PC-9 (cell line): ENCODE measurements at regions of chr5 and their contacts with region 1.

Region 1: GRCh38 chr5:39074016-39074886 is at the start of gene RICTOR:
- DNase-seq: peak; percentile 67 to 99
- H3K4me3 ChIP-seq: peak within 1 kb of the TSS; percentile 93
- H3K27ac ChIP-seq: peak within 1 kb of the TSS; percentile 96
- H3K4me1 ChIP-seq: peaks cover 41% of the 10 kb centered on the region
- H3K27me3 ChIP-seq: no peaks in the 10 kb centered on the region
- CTCF ChIP-seq: no peak
- total RNA-seq, gene RICTOR: 103 and 121 TPM in 2 replicates

Region 2: GRCh38 chr5:38845526-38846378 is 228.5 kb before region 1 on chr5 and contains the start of gene OSMR:
- CTCF ChIA-PET with region 1: no interaction called
- POLR2A ChIA-PET with region 1: no interaction called
- intact Hi-C with region 1: loop called (anchors 5 kb)
- DNase-seq: peak; percentile 92 to 100
- H3K4me3 ChIP-seq: peak within 1 kb of the TSS; percentile 79
- H3K27ac ChIP-seq: peak within 1 kb of the TSS; percentile 95
- H3K4me1 ChIP-seq: peaks cover 48% of the 10 kb centered on the region
- H3K27me3 ChIP-seq: no peaks in the 10 kb centered on the region
- CTCF ChIP-seq: no peak
- total RNA-seq, gene OSMR: 45.3 and 65.4 TPM in 2 replicates

Region 3: DNA sequence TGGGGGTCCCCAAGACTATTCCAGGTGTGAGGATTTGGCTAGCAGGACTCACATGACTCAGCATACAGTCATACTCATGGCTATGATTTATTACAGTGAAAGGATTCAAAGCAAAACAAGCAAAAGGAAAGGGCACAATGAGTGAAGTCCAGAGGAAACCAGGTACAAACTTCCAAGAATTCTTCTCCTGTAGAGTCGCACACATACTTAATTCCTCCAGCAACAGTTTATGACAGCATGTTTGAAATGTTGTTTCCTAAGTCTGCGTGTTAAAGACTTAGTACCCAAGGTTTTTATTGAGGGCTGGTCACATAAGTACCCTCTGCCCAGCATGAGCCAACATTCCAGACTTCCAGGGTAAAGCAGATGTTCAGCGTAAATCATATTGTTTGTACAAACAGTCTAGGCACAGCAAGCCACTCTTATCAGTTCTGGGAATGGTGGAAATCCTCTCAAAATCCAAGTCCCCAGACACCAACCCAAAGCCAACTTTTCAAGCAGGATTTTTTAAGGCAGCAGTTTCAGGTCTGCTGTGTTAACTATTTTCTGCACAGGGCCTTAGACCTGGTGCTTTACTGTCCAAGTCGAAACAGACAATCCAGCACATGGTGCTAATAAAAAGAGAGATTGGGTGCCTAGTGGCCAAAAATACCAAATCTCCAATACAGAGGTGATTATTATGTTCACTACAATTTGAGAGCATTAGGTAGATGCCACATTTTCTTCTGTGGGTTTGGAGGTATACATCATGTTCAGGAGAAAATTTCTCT is 18.5 kb after region 1 on chr5:
- CTCF ChIA-PET with region 1: interaction called, 3 read pairs
- POLR2A ChIA-PET with region 1: interaction called, 3 read pairs
- intact Hi-C with region 1: loop called (anchors 2 kb)
- DNase-seq: peak in 1 of 2 experiments; percentile 71
- H3K4me3 ChIP-seq: no peak overlapping the region
- H3K27ac ChIP-seq: peak overlapping the region; percentile 75
- H3K4me1 ChIP-seq: peaks cover 18% of the 10 kb centered on the region
- H3K27me3 ChIP-seq: no peaks in the 10 kb centered on the region
- CTCF ChIP-seq: no peak

Region 4: DNA sequence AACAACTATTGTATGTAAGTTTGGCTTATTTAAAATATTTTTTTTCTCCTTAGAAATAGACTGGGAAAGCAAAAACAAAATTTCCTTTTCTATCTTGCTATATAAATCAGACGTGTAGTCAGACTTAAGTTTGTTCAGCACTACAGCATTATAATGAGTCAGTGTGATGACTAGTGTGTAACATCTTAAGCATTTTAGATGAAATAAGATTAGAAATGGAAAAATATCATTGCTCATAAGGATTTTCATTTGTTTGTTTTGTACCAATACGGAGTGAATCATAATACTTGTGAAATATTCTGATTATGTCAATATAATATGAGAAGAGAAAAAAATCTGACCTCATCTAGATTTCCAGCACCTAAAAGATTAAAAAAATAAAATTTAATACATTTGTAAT is 64.6 kb after region 1 on chr5:
- CTCF ChIA-PET with region 1: no interaction called
- POLR2A ChIA-PET with region 1: interaction called, 6 read pairs
- intact Hi-C with region 1: loop called (anchors 1 kb)
- DNase-seq: peak in 1 of 2 experiments; percentile 98
- H3K4me3 ChIP-seq: 0 out of 2 replicates have a peak overlapping the region, but pooled peaks have one; percentile 9
- H3K27ac ChIP-seq: peak overlapping the region; percentile 89
- H3K4me1 ChIP-seq: peaks cover 21% of the 10 kb centered on the region
- H3K27me3 ChIP-seq: no peaks in the 10 kb centered on the region
- CTCF ChIP-seq: no peak

Region 5: GRCh38 chr5:39194466-39195136 is 120.3 kb after region 1 on chr5:
- CTCF ChIA-PET with region 1: interaction called, 5 read pairs
- POLR2A ChIA-PET with region 1: interaction called, 5 read pairs
- intact Hi-C with region 1: loop called (anchors 1 kb)
- DNase-seq: peak; percentile 78 to 93
- H3K4me3 ChIP-seq: peak overlapping the region; percentile 13; the same call in 1 of the 2 replicates
- H3K27ac ChIP-seq: peak overlapping the region; percentile 91
- H3K4me1 ChIP-seq: peaks cover 56% of the 10 kb centered on the region
- H3K27me3 ChIP-seq: no peaks in the 10 kb centered on the region
- CTCF ChIP-seq: no peak

Region 6: GRCh38 chr5:39283231-39283818 is 209.1 kb after region 1 on chr5:
- CTCF ChIA-PET with region 1: no interaction called
- POLR2A ChIA-PET with region 1: no interaction called
- intact Hi-C with region 1: loop called (anchors 1 kb)
- DNase-seq: peak; percentile 61 to 64
- H3K4me3 ChIP-seq: no peak overlapping the region
- H3K27ac ChIP-seq: no peak overlapping the region
- H3K4me1 ChIP-seq: no peaks in the 10 kb centered on the region
- H3K27me3 ChIP-seq: no peaks in the 10 kb centered on the region
- CTCF ChIP-seq: peak; percentile 91

Region 7: DNA sequence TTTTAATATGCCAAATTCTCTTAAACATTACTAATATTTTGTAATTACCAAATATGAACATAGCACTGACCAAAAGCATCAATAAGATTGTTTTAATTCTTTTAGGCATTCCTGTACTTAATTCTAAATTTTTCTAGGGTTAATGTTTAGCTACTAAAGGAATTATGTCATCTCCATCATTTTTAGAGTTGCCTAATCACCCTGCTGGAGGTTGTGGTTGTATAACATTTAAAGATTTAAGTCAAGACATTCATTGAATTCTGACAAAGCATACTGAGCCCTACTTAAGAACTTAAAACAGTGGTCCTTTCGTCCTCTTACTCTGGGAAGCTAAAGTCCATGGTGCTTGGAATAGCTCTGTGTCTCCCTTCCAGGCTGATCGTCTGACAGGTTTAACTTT is 378.6 kb after region 1 on chr5:
- CTCF ChIA-PET with region 1: no interaction called
- POLR2A ChIA-PET with region 1: no interaction called
- intact Hi-C with region 1: no loop called
- DNase-seq: peak in 1 of 2 experiments; percentile 10
- H3K4me3 ChIP-seq: no peak overlapping the region
- H3K27ac ChIP-seq: no peak overlapping the region
- H3K4me1 ChIP-seq: no peaks in the 10 kb centered on the region
- H3K27me3 ChIP-seq: no peaks in the 10 kb centered on the region
- CTCF ChIP-seq: no peak